Common myeloid progenitor, CD34-positive (primary cell): ENCODE measurements at regions of chr7 and their contacts with region 1.

Region 1: DNA sequence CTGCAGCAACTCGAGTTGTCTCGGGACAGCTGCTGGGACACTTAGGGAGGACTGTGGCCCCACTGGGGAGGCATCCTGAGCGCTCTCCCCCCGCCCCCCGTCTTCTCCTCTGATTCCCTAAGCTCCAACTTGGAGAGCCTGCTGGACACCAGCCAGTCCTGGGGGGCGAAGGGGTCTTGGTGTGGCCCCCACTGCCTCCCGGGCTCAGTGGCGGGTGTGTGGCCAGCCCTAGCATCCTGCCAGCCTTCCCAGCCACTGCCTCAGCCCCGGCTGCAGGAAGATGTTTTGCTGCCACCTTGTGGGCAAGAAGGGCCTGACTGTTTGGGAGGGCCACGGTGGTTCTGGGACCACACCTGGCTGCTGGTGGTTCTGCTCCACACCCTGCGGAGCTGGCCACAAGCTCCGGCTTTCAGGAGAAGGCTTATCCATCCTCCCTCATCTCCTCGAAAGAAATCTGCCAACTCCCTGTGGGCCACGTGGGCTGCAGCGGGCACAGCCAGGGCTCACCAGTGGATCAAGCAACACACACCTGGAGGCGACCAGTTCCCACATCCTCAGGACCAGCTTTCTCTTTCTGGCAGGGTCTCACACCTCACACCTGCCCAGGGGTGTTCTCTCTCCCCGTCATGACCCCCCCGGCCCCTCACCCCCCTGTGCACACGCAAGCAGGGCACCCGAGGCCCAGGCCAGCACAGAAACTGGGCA is 24.8 kb downstream of the AGAP3 start:
- DNase-seq: peak; percentile 57 to 74 (median 67)
- H3K4me3 ChIP-seq: no peak overlapping the region
- H3K27ac ChIP-seq: no peak overlapping the region
- H3K4me1 ChIP-seq: peaks cover 0 to 12% (median 6%) of the 10 kb centered on the region in 4 experiments
- H3K27me3 ChIP-seq: peaks cover 0 to 22% (median 6%) of the 10 kb centered on the region in 5 experiments

Region 2: GRCh38 chr7:150845421-150845861 is 265.7 kb before region 1 on chr7:
- CTCF ChIA-PET with region 1: no interaction called
- POLR2A ChIA-PET with region 1: no interaction called
- DNase-seq: peak in 2 of 3 donors; percentile 48 to 53
- H3K4me3 ChIP-seq: no peak overlapping the region
- H3K27ac ChIP-seq: no peak overlapping the region
- H3K4me1 ChIP-seq: peaks cover 0 to 13% (median 7%) of the 10 kb centered on the region in 4 experiments
- H3K27me3 ChIP-seq: peaks cover 0 to 2% (median 0%) of the 10 kb centered on the region in 5 experiments

Region 3: DNA sequence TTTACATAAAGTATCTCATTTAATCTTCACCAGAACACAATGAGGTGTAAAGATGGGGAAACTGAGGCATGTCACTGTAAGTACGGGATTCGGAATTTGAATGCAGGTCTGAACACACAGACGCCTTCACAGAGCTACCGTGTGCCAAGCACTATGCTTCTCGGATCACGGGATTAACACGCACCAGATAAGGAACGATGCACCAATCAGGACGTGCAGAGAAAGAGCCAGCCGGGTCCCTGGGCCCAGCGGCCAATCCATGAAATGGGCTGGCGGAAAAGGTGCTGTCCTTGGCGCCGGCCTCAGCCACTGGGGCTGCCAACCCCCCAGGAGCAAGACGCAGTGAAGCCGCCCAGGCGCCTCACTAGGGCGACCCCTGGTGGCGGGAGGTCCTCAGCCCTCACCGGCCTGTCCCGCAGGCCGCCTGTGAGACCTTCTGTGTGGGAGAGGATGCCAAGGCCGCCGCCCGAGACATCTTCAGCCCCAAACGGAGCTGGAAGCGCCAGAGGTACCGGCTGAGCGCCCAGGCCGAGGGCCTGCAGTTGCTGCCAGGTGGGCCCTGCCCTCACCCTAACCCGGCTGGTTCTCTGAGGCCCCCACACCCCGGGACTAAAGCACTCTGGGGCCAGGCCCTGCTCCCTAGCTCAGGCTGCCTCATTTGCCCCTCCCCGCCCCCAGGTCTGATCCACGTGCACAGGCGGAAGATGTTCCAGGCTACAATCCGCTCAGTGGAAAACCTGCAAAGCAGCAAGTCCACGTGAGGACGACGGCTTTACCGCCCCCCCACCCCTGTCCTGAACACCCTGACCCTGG is 102.4 kb before region 1 on chr7:
- CTCF ChIA-PET with region 1: interaction called, 17 read pairs
- POLR2A ChIA-PET with region 1: no interaction called
- DNase-seq: peak in 2 of 3 donors; percentile 65 to 69
- H3K4me3 ChIP-seq: peak overlapping the region in 2 of 7 experiments; percentile 3 to 14
- H3K27ac ChIP-seq: peak overlapping the region in 1 of 2 experiments; percentile 44
- H3K4me1 ChIP-seq: peaks cover 0 to 36% (median 30%) of the 10 kb centered on the region in 4 experiments
- H3K27me3 ChIP-seq: peaks cover 0 to 38% (median 4%) of the 10 kb centered on the region in 5 experiments

Region 4: GRCh38 chr7:151017953-151018420 is 93.1 kb before region 1 on chr7:
- CTCF ChIA-PET with region 1: interaction called, 19 read pairs
- POLR2A ChIA-PET with region 1: no interaction called
- DNase-seq: peak; percentile 70 to 87 (median 86)
- H3K4me3 ChIP-seq: peak overlapping the region in 6 of 7 experiments; percentile 14 to 66 (median 46)
- H3K27ac ChIP-seq: peak overlapping the region in 1 of 2 experiments; percentile 61
- H3K4me1 ChIP-seq: peaks cover 0 to 40% (median 31%) of the 10 kb centered on the region in 4 experiments
- H3K27me3 ChIP-seq: peaks cover 5 to 40% (median 13%) of the 10 kb centered on the region in 5 experiments

Region 5: GRCh38 chr7:151080067-151080521 is 31.0 kb before region 1 on chr7:
- CTCF ChIA-PET with region 1: interaction called, 219 read pairs
- POLR2A ChIA-PET with region 1: no interaction called
- DNase-seq: peak in 2 of 3 donors; percentile 42 to 51
- H3K4me3 ChIP-seq: peak overlapping the region; percentile 71 to 94 (median 87)
- H3K27ac ChIP-seq: peak overlapping the region; percentile 75 to 92
- H3K4me1 ChIP-seq: peaks cover 3 to 46% (median 42%) of the 10 kb centered on the region in 4 experiments
- H3K27me3 ChIP-seq: no peaks in the 10 kb centered on the region

Region 6: GRCh38 chr7:151085691-151086620 is 25.1 kb before region 1 on chr7 and contains the start of gene AGAP3:
- CTCF ChIA-PET with region 1: interaction called, 219 read pairs
- POLR2A ChIA-PET with region 1: interaction called, 11 read pairs
- DNase-seq: peak in 2 of 3 donors; percentile 39 to 55
- H3K4me3 ChIP-seq: peak within 1 kb of the TSS; percentile 52 to 87 (median 79)
- H3K27ac ChIP-seq: peak within 1 kb of the TSS in 1 of 2 experiments; percentile 88
- H3K4me1 ChIP-seq: peaks cover 9 to 73% (median 67%) of the 10 kb centered on the region in 4 experiments
- H3K27me3 ChIP-seq: no peaks in the 10 kb centered on the region

Region 7: GRCh38 chr7:151152643-151153513 is 41.8 kb after region 1 on chr7:
- CTCF ChIA-PET with region 1: no interaction called
- POLR2A ChIA-PET with region 1: no interaction called
- DNase-seq: peak in 1 of 3 donors; percentile 14
- H3K4me3 ChIP-seq: no peak overlapping the region
- H3K27ac ChIP-seq: no peak overlapping the region
- H3K4me1 ChIP-seq: no peaks in the 10 kb centered on the region
- H3K27me3 ChIP-seq: peaks cover 0 to 44% (median 35%) of the 10 kb centered on the region in 5 experiments